Heart right ventricle (tissue), 16 donors: ENCODE measurements at regions of chr4 and their contacts with region 1.

Region 1: DNA sequence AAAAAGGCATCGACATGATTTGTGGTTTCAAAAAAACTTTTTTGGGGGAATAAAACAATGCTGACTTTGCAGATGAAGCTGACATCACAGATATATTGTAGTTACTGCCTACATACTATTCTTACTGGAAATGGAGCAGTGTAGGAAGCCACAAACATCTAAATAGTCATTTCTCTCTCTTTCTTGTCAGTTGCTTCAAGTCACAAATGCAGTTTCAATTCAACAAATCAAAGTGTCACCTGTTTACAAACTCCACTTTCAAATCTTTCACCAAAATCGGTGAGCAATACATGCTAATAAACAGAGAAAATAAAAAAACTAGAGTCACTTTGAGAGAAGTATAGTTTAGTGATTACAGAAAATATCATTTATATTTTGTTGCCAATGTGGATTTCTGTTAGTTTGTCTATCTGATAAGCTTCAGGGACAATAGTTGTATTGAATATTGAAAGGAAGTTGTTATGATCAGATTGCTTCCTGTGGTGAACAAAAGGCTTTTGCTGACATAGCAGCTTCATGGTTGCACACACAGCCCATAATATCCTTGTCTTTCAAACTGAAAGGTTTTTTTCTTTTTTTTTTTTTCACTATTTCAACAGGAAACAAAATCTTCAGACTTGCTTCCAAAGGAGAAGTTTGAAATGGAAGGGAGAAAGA is 49.7 kb upstream of the PTPN13 start:
- DNase-seq: no peak
- ATAC-seq: no peak
- H3K4me3 ChIP-seq: no peak overlapping the region
- H3K27ac ChIP-seq: peak overlapping the region in 4 of 10 donors; percentile 16 to 65 (median 24)
- H3K4me1 ChIP-seq: peaks cover 0 to 35% (median 12%) of the 10 kb centered on the region in 9 donors
- H3K27me3 ChIP-seq: peaks cover 0 to 55% (median 7%) of the 10 kb centered on the region in 7 donors
- CTCF ChIP-seq: no peak

Region 2: GRCh38 chr4:86586160-86586572 is 41.7 kb after region 1 on chr4:
- intact Hi-C with region 1: loop called in 3 of 10 experiments (anchors 5 to 10 kb)
- DNase-seq: no peak
- ATAC-seq: peak in 5 of 8 donors; percentile 30 to 63 (median 52)
- H3K4me3 ChIP-seq: no peak overlapping the region
- H3K27ac ChIP-seq: peak overlapping the region in 7 of 10 donors; percentile 3 to 77 (median 45)
- H3K4me1 ChIP-seq: peaks cover 0 to 23% (median 3%) of the 10 kb centered on the region in 9 donors
- H3K27me3 ChIP-seq: no peaks in the 10 kb centered on the region
- CTCF ChIP-seq: no peak

Region 3: DNA sequence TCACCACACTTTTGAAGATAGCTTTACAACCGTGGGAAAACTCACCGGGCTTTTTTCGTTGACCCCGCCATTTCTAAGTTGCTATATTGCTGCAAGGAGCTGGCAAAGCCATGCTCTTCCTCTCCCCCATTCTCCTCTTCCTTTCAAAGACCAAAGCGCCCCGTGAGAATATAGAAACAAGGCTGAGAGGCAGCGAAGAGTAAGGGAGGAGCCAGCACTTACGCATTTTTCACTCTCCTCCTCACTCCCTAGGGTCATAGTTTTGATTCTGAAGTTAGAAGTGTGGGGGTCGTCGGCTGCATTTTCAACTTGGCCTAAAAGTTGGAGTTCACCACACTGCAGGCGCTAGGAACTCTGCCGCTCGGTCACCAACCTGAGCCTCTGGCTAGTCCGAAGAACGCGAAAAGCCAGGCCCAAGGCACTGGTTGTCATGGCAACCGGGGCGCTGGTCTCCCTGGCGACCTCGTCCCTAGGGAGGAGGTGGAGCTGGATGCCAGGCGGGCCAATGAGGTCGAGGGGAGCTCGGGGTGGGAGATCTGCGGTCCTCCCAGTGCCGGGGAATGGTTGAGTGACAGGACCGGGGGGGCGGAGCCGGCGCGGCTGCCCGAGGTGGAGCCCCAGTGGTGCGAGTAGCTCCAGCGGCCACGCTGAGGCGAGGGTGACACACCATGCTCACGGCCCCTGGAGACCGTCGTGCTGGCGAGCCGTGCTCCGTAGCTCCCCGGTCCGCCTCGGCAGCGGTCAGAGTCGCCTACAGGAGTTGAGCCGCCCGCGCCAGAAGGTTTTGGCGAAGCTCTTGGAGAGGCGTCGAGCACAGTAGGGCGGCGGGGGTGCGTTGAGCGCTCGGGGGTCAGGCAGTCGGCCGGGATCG is 49.5 kb after region 1 on chr4 and contains the start of gene PTPN13:
- intact Hi-C with region 1: loop called in 3 of 10 experiments (anchors 5 to 10 kb)
- DNase-seq: peak; percentile 93 to 95
- ATAC-seq: peak; percentile 96 to 99 (median 98)
- H3K4me3 ChIP-seq: peak within 1 kb of the TSS; percentile 36 to 72 (median 64)
- H3K27ac ChIP-seq: peak within 1 kb of the TSS; percentile 11 to 77 (median 70)
- H3K4me1 ChIP-seq: peaks cover 0 to 39% (median 6%) of the 10 kb centered on the region in 9 donors
- H3K27me3 ChIP-seq: peaks cover 0 to 53% (median 44%) of the 10 kb centered on the region in 7 donors
- CTCF ChIP-seq: peak in 1 of 9 donors; percentile 8
- total RNA-seq, gene PTPN13: 1.4 to 5.5 (median 3.0) TPM